ENCODE measurements at regions of chr18 and their contacts with region 1.

Region 1: GRCh38 chr18:23131693-23132319 is 3.5 kb upstream of the CABLES1 start:
- H3K4me3 ChIP-seq: no peak overlapping the region
- H3K27ac ChIP-seq: no peak overlapping the region
- H3K4me1 ChIP-seq: peaks cover 13% of the 10 kb centered on the region
- CTCF ChIP-seq: peak; percentile 42; the same call in 1 of the 2 replicates

Region 2: DNA sequence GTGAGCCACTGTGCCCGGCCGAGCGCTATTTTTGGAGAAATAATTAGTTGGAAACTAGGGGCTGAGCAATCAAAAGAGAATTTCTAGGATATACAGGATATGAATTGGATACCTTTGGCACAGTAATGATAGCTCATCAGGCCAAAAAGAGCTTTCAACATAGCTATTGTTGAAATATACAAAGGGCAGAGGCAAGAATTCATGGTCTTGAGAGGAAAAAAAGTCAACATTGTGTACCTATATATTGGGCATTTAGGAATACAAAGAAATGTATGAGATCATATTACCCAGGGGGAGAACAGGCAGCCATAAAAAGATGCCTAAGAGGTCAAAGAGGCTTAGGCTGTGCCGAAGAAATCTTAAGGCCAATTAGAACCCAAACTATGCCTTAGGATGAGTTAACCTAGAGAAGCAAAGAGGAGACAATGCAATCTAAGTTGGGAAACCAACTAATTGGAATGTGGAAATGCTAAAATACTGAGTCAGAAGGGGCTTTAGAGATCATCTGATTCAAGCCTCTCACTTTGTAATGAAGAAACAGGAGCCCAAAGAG is 99.7 kb before region 1 on chr18:
- CTCF ChIA-PET with region 1: interaction called, 13 read pairs
- POLR2A ChIA-PET with region 1: interaction called, 5 read pairs
- H3K4me3 ChIP-seq: no peak overlapping the region
- H3K27ac ChIP-seq: no peak overlapping the region
- H3K4me1 ChIP-seq: no peaks in the 10 kb centered on the region
- CTCF ChIP-seq: no peak

Region 3: DNA sequence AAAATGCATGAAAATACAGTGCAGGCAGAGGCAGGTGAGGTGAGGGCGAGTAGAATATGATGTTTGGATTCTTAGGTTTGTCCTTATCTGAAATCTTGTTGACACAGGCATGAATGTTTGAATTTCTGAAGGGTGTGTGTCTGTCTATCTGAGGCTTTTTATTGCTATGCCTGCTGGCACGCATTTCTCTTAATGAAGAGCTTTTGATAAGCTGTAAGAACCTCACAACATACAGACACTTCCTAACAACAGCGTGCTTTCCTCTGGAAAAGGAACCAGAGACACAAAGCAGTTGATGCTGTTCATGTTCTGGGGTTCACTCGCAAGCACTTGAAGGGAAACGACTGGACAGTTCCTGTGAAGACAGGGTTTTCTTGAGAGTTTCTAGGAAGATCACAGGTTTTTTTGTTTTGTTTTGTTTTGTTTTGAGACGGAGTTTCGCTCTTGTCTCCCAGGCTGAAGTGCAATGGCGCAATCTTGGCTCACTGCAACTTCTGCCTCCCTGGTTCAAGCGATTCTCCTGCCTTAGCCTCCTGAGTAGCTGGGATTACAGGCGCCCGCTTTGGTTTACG is 29.9 kb before region 1 on chr18:
- CTCF ChIA-PET with region 1: interaction called, 10 read pairs
- POLR2A ChIA-PET with region 1: interaction called, 3 read pairs
- H3K4me3 ChIP-seq: no peak overlapping the region
- H3K27ac ChIP-seq: peak overlapping the region; percentile 70
- H3K4me1 ChIP-seq: peaks cover 11% of the 10 kb centered on the region
- CTCF ChIP-seq: no peak

Region 4: GRCh38 chr18:23115683-23116096 is 16.1 kb before region 1 on chr18:
- CTCF ChIA-PET with region 1: interaction called, 11 read pairs
- POLR2A ChIA-PET with region 1: interaction called, 4 read pairs
- H3K4me3 ChIP-seq: no peak overlapping the region
- H3K27ac ChIP-seq: no peak overlapping the region
- H3K4me1 ChIP-seq: peaks cover 12% of the 10 kb centered on the region
- CTCF ChIP-seq: no peak

Region 5: GRCh38 chr18:23377669-23378301 is 246.0 kb after region 1 on chr18:
- CTCF ChIA-PET with region 1: interaction called, 28 read pairs
- POLR2A ChIA-PET with region 1: no interaction called
- H3K4me3 ChIP-seq: no peak overlapping the region
- H3K27ac ChIP-seq: no peak overlapping the region
- H3K4me1 ChIP-seq: no peaks in the 10 kb centered on the region
- CTCF ChIP-seq: no peak

Region 6: DNA sequence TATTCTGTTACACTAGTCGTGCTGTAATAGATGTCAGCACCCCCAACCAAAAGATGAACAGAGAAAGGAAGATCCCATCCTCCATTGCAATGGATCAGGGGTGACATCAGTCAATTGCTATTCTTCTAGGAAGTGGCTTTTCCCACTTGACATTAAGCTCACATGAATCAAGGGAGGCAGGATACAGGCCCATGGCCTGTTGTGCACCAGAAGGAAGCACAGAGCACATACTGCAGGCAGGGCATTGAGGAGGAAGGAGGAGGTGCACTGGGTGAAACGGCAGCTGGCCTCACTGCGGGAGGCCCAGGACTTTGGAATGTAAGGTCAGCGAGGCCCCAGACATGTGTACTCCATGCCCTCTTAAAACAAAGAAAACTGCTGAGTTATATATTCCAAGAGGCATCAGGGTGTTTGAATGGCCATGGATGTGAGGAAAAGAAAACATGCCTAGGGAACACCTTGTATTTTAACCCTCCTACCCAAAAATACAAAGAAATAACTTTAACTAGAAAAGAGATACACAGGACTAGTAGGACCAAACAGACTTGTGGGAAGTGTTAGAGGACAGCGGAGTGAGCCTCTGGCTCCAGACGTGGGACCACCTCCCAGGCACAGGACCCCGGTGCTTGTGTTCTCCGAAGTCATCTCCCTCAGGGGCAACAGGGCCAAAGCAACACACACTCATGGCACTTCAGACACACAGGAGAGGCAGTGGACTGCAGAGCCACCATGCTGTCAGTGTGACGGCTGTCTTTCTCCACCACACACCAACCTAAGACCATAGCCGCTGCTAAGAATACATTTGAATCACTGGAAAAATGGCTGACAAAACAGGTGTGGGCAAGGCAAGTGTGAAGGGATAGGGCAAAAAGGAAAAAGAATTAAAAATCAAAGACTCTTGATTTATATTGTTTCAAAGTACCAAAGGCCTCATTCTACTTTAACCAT is 269.9 kb after region 1 on chr18:
- CTCF ChIA-PET with region 1: interaction called, 16 read pairs
- POLR2A ChIA-PET with region 1: interaction called, 4 read pairs
- H3K4me3 ChIP-seq: no peak overlapping the region
- H3K27ac ChIP-seq: no peak overlapping the region
- H3K4me1 ChIP-seq: no peaks in the 10 kb centered on the region
- CTCF ChIP-seq: no peak

Region 7: DNA sequence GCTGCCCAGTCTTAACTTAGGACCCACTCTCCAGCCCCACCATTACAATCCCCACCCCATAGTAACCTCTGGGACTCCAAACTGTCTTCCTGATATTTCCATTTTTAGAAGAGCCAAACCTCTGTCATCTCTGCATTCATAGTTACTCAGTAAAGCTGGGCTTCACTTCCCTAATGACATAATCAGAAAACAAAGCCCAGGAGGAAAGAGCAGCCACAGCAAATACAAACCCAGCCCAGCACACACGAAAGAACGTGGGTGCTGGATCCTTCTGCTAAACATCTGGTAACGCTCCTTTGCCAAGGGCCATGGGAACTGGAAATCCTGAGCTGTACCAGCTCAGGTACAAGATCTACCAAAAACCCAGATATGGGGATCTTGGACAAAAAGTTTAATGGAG is 284.5 kb after region 1 on chr18:
- CTCF ChIA-PET with region 1: interaction called, 26 read pairs
- POLR2A ChIA-PET with region 1: interaction called, 3 read pairs
- H3K4me3 ChIP-seq: no peak overlapping the region
- H3K27ac ChIP-seq: no peak overlapping the region
- H3K4me1 ChIP-seq: no peaks in the 10 kb centered on the region
- CTCF ChIP-seq: no peak